T-cell (primary cell): ENCODE measurements at regions of chr17 and their contacts with region 1.

Region 1: GRCh38 chr17:29148790-29149430 is 31.3 kb downstream of the MYO18A start:
- DNase-seq: peak; percentile 74 to 96 (median 86)
- ATAC-seq: peak; percentile 93 to 98 (median 93)
- H3K4me3 ChIP-seq: peak overlapping the region; percentile 50 to 76
- H3K4me3 Mint-ChIP-seq: peak overlapping the region; percentile 70 to 74 (median 73)
- H3K27ac ChIP-seq: peak overlapping the region; percentile 72
- H3K27ac Mint-ChIP-seq: peak overlapping the region; percentile 86 to 88
- H3K4me1 ChIP-seq: peaks cover 8 to 30% of the 10 kb centered on the region in 2 experiments
- H3K4me1 Mint-ChIP-seq: peaks cover 38 to 53% (median 49%) of the 10 kb centered on the region in 3 donors
- H3K27me3 ChIP-seq: no peaks in the 10 kb centered on the region
- H3K27me3 Mint-ChIP-seq: no peaks in the 10 kb centered on the region

Region 2: GRCh38 chr17:28612936-28613872 is 535.7 kb before region 1 on chr17:
- CTCF ChIA-PET with region 1: no interaction called
- POLR2A ChIA-PET with region 1: interaction called in 1 of 2 experiments, 10 read pairs
- DNase-seq: peak in 24 of 35 experiments; percentile 3 to 63 (median 26)
- ATAC-seq: peak; percentile 48 to 69 (median 60)
- H3K4me3 ChIP-seq: no peak overlapping the region
- H3K4me3 Mint-ChIP-seq: no peak overlapping the region
- H3K27ac ChIP-seq: no peak overlapping the region
- H3K27ac Mint-ChIP-seq: peak overlapping the region in 1 of 2 donors; percentile 52
- H3K4me1 ChIP-seq: no peaks in the 10 kb centered on the region
- H3K4me1 Mint-ChIP-seq: peaks cover 4 to 9% (median 8%) of the 10 kb centered on the region in 3 donors
- H3K27me3 ChIP-seq: no peaks in the 10 kb centered on the region
- H3K27me3 Mint-ChIP-seq: no peaks in the 10 kb centered on the region

Region 3: GRCh38 chr17:29124117-29124924 is 24.6 kb before region 1 on chr17:
- CTCF ChIA-PET with region 1: interaction called, 7 to 14 read pairs
- POLR2A ChIA-PET with region 1: no interaction called
- DNase-seq: peak in 14 of 35 experiments; percentile 1 to 71 (median 24)
- ATAC-seq: peak; percentile 76 to 90 (median 86)
- H3K4me3 ChIP-seq: no peak overlapping the region
- H3K4me3 Mint-ChIP-seq: no peak overlapping the region
- H3K27ac ChIP-seq: no peak overlapping the region
- H3K27ac Mint-ChIP-seq: no peak overlapping the region
- H3K4me1 ChIP-seq: peaks cover 0 to 8% of the 10 kb centered on the region in 2 experiments
- H3K4me1 Mint-ChIP-seq: peaks cover 5 to 9% (median 9%) of the 10 kb centered on the region in 3 donors
- H3K27me3 ChIP-seq: no peaks in the 10 kb centered on the region
- H3K27me3 Mint-ChIP-seq: no peaks in the 10 kb centered on the region

Region 4: DNA sequence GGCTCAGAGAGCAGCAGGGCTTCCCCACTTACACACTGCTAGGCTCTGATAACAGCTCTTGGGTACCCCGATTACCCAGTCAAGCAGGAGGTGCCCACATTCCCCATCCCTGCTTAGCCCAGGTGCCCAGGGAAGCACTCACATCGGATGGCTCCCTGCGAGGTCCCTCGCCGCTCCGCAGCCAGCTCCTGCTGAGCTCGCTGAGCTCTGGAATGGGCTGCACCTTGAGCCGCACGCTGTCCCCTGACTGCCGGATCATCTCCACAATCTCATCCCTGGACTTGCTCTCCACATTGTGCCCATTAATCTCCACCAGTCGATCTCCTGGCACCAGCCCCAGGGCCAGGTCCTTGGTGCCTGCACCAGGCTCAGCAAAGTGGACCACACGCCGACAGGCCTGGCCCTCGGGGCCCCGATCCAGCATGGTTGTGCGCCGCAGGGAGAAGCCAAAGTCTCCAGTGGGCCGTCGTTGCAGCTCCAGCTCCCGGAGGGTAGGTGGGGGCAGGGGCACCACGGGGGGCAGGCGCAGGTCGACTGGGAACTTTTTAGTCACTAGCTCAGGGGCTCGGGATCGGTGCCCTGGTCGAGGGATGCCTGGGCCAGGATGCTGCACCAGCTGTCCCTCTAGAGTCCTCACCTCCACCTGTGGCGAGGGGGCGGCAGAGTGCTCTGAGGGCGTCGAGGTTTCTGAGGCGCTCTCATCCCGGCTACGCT is 17.0 kb after region 1 on chr17:
- CTCF ChIA-PET with region 1: no interaction called
- POLR2A ChIA-PET with region 1: no interaction called
- DNase-seq: no peak
- ATAC-seq: no peak
- H3K4me3 ChIP-seq: no peak overlapping the region
- H3K4me3 Mint-ChIP-seq: no peak overlapping the region
- H3K27ac ChIP-seq: no peak overlapping the region
- H3K27ac Mint-ChIP-seq: no peak overlapping the region
- H3K4me1 ChIP-seq: no peaks in the 10 kb centered on the region
- H3K4me1 Mint-ChIP-seq: peaks cover 0 to 13% (median 0%) of the 10 kb centered on the region in 3 donors
- H3K27me3 ChIP-seq: no peaks in the 10 kb centered on the region
- H3K27me3 Mint-ChIP-seq: no peaks in the 10 kb centered on the region

Region 5: DNA sequence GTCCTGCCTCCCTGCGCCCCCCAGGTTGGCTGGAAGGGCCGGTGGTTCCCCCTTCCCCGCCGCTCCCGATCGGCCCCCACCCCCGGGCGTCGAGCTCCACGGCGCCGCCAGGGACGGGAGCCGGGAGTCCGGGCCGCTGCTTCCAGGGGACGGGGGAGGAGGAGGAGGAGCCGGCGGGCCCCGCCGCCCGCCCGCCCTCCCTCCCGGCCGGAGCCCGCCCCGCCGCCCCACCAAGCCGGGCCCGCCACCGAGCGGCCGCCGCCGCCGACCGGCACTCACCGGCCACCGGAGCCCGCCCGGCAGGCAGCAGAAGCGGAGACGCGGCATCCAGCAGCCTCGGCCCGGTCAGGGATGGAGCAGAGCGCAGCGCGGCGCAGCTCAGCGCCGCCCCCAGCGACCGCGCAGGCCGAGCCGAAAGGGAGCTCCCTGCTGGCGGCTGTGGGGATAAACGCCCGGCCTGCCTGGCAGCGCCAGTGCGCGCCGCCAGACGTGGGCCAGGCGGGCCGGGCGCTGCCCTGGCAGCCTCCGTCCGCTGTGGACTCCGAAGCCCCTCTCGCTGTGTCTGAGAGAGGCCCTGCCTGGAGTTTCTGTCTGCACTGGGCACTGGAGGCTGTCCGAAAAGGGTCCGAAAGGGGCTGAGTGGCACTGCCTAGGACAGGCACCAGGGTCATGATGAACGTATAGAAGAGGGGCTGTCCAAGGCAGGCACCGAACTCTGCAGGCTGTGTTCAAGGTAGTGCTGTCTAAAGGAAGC is 31.3 kb after region 1 on chr17 and contains the start of gene MYO18A:
- CTCF ChIA-PET with region 1: interaction called, 10 to 184 read pairs
- POLR2A ChIA-PET with region 1: interaction called in 1 of 2 experiments, 8 read pairs
- DNase-seq: peak; percentile 37 to 88 (median 70)
- ATAC-seq: peak; percentile 90 to 97 (median 92)
- H3K4me3 ChIP-seq: peak within 1 kb of the TSS; percentile 29 to 33
- H3K4me3 Mint-ChIP-seq: peak within 1 kb of the TSS; percentile 55 to 85 (median 64)
- H3K27ac ChIP-seq: no peak within 1 kb of the TSS
- H3K27ac Mint-ChIP-seq: no peak within 1 kb of the TSS
- H3K4me1 ChIP-seq: peaks cover 5 to 32% of the 10 kb centered on the region in 2 experiments
- H3K4me1 Mint-ChIP-seq: peaks cover 14 to 29% (median 16%) of the 10 kb centered on the region in 3 donors
- H3K27me3 ChIP-seq: no peaks in the 10 kb centered on the region
- H3K27me3 Mint-ChIP-seq: no peaks in the 10 kb centered on the region
- total RNA-seq, gene MYO18A: 119 to 151 (median 145) TPM

Region 6: DNA sequence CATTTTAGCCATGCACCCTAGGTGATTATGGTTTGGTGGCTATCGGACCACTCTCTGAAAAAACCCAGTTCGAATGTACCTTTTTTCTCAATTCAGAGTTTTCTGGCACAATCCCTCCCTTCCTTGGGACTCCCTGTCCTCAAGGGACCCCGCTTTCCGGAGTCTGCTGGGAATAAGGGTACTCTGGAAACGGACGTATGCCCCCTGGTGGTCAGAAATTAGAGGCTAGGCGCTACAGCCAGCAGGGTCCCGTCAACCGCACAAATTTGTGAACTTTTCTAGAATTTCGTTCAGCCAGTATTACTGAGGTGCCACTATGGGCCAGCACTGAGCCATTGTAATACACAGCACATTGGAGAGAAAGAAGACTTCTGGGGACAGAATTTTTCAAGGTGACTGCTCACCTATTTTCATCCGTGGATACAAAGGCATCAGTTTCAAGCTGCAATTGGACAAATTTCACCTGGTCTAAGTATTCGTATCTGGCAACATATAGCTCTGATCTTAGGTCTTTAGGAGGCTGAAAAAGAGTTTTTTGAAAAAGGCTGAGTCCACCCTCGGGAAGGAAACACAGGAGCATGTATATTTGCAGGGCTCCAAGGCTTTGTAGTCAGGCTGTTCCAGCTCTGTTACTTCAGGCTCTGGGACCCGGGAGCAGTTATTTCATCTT is 70.6 kb after region 1 on chr17:
- CTCF ChIA-PET with region 1: interaction called in 1 of 2 experiments, 20 read pairs
- POLR2A ChIA-PET with region 1: no interaction called
- DNase-seq: peak; percentile 21 to 84 (median 54)
- ATAC-seq: peak; percentile 78 to 97 (median 90)
- H3K4me3 ChIP-seq: no peak overlapping the region
- H3K4me3 Mint-ChIP-seq: no peak overlapping the region
- H3K27ac ChIP-seq: no peak overlapping the region
- H3K27ac Mint-ChIP-seq: no peak overlapping the region
- H3K4me1 ChIP-seq: peaks cover 0 to 4% of the 10 kb centered on the region in 2 experiments
- H3K4me1 Mint-ChIP-seq: peaks cover 6 to 7% (median 6%) of the 10 kb centered on the region in 3 donors
- H3K27me3 ChIP-seq: peaks cover 0 to 7% of the 10 kb centered on the region in 2 experiments
- H3K27me3 Mint-ChIP-seq: no peaks in the 10 kb centered on the region

Region 7: DNA sequence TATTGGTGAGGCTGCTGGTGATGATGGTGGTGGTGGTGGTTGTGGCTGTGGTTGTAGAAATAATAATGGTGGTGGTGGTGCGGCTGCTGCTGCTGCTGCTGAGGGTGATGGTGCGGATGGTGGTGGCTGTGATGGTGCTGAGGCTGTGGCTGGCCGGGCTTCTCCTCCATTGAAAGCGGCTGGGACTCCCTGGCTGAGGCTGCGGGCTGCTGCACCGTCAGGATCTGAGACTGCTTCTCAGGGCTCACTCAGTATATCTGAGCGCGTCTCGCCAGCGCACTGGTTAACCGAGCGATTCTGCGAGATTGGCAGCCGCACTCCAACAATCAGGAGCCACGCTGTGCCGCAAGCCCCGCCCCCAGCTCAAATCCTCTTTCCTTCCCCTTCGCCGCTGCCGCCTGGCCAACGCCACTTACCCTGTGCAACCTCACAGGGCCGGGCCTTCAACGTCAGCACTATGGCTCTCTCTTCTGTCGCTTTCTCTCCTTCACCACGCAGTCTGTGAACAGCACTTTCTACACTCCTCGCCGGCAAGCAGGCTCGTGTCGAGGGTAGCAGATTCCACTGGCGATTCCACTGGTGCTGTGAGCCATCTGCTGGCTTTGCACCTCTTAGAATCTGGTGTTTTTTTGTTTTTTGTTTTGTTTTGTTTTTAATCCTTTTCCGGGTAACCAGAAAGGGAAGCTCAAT is 145.1 kb after region 1 on chr17 and contains the start of gene NUFIP2:
- CTCF ChIA-PET with region 1: interaction called, 4 to 18 read pairs
- POLR2A ChIA-PET with region 1: interaction called in 1 of 2 experiments, 17 read pairs
- DNase-seq: peak; percentile 96 to 99 (median 98)
- ATAC-seq: peak; percentile 85 to 90 (median 88)
- H3K4me3 ChIP-seq: peak within 1 kb of the TSS; percentile 78 to 98
- H3K4me3 Mint-ChIP-seq: peak within 1 kb of the TSS; percentile 99 to 100 (median 100)
- H3K27ac ChIP-seq: peak within 1 kb of the TSS; percentile 87
- H3K27ac Mint-ChIP-seq: peak within 1 kb of the TSS; percentile 100
- H3K4me1 ChIP-seq: peaks cover 22 to 34% of the 10 kb centered on the region in 2 experiments
- H3K4me1 Mint-ChIP-seq: peaks cover 40 to 51% (median 41%) of the 10 kb centered on the region in 3 donors
- H3K27me3 ChIP-seq: no peaks in the 10 kb centered on the region
- H3K27me3 Mint-ChIP-seq: no peaks in the 10 kb centered on the region
- total RNA-seq, gene NUFIP2: 60.7 to 76.2 (median 66.4) TPM

Region 8: GRCh38 chr17:29369831-29370735 is 221.2 kb after region 1 on chr17:
- CTCF ChIA-PET with region 1: interaction called in 1 of 2 experiments, 10 read pairs
- POLR2A ChIA-PET with region 1: no interaction called
- DNase-seq: peak; percentile 22 to 76 (median 46)
- ATAC-seq: peak; percentile 95 to 98 (median 97)
- H3K4me3 ChIP-seq: no peak overlapping the region
- H3K4me3 Mint-ChIP-seq: no peak overlapping the region
- H3K27ac ChIP-seq: peak overlapping the region; percentile 54
- H3K27ac Mint-ChIP-seq: no peak overlapping the region
- H3K4me1 ChIP-seq: peaks cover 0 to 6% of the 10 kb centered on the region in 2 experiments
- H3K4me1 Mint-ChIP-seq: no peaks in the 10 kb centered on the region
- H3K27me3 ChIP-seq: no peaks in the 10 kb centered on the region
- H3K27me3 Mint-ChIP-seq: no peaks in the 10 kb centered on the region

Region 9: DNA sequence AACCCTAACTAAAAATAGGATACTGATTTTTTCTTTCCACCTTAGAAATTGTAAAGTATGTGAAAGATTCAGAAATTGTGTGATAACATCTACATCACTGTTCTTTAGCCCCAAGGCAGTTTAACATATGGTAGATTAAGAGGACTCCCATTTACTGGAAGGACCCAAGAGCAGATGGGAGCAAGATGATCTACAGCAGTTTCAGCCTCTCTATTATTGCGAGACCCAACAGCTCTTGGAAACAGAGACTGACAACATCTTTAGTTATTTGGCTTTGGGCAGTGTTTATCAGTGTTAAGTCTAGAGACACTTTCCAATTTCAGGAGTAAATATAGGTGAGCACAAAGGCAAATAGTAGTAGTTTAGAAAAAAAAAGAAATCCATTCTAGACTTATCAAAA is 598.8 kb after region 1 on chr17:
- CTCF ChIA-PET with region 1: no interaction called
- POLR2A ChIA-PET with region 1: no interaction called
- DNase-seq: no peak
- ATAC-seq: no peak
- H3K4me3 ChIP-seq: no peak overlapping the region
- H3K4me3 Mint-ChIP-seq: peak overlapping the region in 1 of 3 donors; percentile 35
- H3K27ac ChIP-seq: no peak overlapping the region
- H3K27ac Mint-ChIP-seq: peak overlapping the region; percentile 44 to 62
- H3K4me1 ChIP-seq: peaks cover 18 to 19% of the 10 kb centered on the region in 2 experiments
- H3K4me1 Mint-ChIP-seq: peaks cover 81 to 90% (median 83%) of the 10 kb centered on the region in 3 donors
- H3K27me3 ChIP-seq: no peaks in the 10 kb centered on the region
- H3K27me3 Mint-ChIP-seq: no peaks in the 10 kb centered on the region